Activated T-helper 1 cell treated with anti-CD3 and anti-CD28 coated beads, Interleukin-12 subunit alpha, Interleukin-12 subunit beta, Interleukin-2, Interleukin-4 antibody, amounts not matched to agents 30 ng/mL and 10 ng/mL and 1 ng/mL, durations not matched to agents 14 hours and 24 hours and 36 hours (primary cell): ENCODE measurements at regions of chr5 and their contacts with region 1.

Region 1: DNA sequence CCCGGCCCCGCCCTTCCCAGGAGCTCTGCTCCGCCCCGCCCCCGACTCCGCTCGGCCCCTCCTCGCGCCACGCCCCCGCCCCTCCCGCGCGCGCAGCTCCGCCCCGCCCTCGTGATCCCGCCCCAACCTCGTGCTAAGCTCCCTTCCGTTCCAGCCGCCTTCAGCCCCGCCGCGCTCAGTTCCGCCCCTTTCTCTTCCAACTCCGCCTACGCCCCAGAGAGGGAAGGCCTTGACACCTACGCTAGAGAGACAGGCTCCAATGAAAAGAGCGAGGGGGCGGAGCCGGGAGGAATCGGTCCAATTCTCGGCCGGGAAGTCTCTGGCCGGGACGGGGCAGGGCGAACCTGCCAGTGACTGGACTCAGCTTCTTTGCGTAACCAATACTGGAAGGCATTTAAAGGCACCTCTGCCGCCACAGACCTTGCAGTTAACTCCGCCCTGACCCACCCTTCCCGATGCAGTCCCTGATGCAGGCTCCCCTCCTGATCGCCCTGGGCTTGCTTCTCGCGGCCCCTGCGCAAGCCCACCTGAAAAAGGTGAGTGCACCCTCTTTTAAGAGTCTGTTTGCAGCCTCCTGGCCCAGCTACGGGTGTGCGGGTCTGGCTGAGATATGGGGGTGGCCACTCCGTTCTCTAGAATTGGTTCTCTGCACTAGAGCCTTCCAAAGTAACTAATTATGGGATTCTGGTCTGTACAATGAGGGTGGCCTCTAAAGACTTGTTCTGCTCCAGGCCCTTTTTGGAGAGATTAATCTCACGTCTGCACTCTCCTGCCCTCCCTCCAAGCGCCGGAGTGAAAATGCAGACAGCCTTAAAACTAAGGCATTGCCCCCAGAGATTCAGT is at the start of gene GM2A:
- DNase-seq: peak; percentile 99
- H3K4me3 Mint-ChIP-seq: peak within 1 kb of the TSS; percentile 87
- H3K27ac Mint-ChIP-seq: peak within 1 kb of the TSS; percentile 88
- H3K4me1 Mint-ChIP-seq: peaks cover 44% of the 10 kb centered on the region
- H3K27me3 Mint-ChIP-seq: peaks cover 2% of the 10 kb centered on the region
- total RNA-seq, gene GM2A: 16.9 and 21.1 TPM in 2 replicates

Region 2: DNA sequence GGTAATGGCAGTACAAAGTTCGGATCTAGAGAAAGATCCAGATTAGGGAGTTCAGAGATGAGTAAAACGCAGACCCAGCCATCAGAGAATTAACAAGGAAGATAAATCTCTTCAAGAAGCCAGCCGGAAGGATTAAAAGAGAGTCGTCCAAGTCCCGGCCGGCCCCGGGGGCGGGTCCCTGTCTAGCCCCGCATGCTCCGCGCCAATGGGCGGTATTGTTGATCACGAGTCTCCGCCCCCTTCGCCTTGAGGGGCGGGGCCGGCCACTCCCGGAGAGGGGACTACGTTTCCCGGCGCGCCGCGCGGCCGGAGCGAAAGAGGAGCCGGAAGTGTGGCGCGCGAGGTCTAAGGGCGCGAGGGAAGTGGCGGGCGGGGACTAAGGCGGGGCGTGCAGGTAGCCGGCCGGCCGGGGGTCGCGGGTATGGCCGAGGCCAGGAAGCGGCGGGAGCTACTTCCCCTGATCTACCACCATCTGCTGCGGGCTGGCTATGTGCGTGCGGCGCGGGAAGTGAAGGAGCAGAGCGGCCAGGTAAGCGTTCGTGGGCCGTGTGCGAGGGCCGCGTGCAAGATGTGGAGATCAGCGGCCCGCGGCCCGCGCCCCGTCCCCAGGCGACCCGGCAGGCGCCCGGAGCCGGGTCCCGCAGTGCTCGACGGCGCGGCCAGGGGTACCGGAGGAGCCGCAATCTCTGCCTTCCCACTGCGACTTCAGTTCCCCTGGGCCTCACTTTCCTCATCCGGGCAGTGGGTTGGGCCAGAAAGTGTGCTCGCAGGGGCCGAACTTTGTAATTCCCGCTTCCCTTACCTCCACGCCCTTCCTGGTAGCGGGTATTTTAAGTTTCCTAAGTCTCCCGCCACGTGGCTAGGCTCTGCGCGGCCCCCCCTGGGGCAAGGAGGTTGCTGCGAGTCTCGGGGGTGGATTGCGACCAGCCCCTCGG is 895.4 kb before region 1 on chr5 and contains the start of gene TCOF1:
- intact Hi-C with region 1: loop called (anchors 5 kb)
- DNase-seq: peak; percentile 97
- H3K4me3 Mint-ChIP-seq: peak within 1 kb of the TSS; percentile 93
- H3K27ac Mint-ChIP-seq: peak within 1 kb of the TSS; percentile 91
- H3K4me1 Mint-ChIP-seq: peaks cover 39% of the 10 kb centered on the region
- H3K27me3 Mint-ChIP-seq: no peaks in the 10 kb centered on the region
- total RNA-seq, gene TCOF1: 130 and 131 TPM in 2 replicates

Region 3: DNA sequence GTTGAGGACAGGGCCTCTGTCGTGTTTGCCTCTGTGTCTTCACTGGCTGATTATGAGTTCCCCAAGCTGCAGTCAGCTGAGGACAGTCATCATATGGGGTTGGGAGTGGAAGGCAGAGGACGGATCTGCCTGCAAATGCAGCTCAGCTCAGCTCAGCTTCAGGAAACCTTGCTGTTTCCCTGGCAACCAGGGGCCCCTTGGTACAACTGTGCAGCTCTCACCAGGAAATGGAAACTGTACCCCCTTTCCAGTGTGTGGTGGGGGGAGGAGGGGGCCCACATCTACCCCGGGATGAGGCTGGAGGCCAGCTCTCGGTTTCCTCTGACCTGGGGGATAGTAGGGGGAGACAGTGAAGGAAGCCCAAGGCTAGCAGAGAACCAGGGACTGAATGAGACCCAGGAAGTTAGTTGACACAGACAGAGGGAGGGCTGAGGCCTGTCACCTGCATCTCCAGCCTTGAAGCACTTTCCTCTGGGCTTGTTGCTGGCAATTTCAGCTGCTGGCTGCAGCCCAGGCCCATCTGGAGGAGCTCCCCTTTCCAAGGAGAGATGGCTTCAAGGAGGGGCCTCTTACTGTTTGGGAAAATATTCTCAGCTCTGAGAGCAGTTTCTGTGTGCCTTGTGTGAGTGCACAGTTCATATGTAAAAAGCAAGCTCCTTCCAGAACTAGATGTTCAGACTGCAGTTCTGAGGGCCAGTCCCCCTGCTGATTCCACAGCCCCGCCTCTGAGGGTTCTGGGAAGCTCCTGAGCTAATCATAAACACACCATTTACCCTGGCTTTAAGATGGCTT is 102.3 kb before region 1 on chr5:
- intact Hi-C with region 1: loop called (anchors 1 kb)
- DNase-seq: peak; percentile 67
- H3K4me3 Mint-ChIP-seq: peak overlapping the region; percentile 71
- H3K27ac Mint-ChIP-seq: peak overlapping the region; percentile 96
- H3K4me1 Mint-ChIP-seq: peaks cover 95% of the 10 kb centered on the region
- H3K27me3 Mint-ChIP-seq: no peaks in the 10 kb centered on the region

Region 4: GRCh38 chr5:151223469-151224264 is 29.3 kb before region 1 on chr5 and contains the start of gene CCDC69:
- intact Hi-C with region 1: loop called (anchors 1 kb)
- DNase-seq: peak; percentile 43
- H3K4me3 Mint-ChIP-seq: peak within 1 kb of the TSS; percentile 77
- H3K27ac Mint-ChIP-seq: peak within 1 kb of the TSS; percentile 78
- H3K4me1 Mint-ChIP-seq: peaks cover 49% of the 10 kb centered on the region
- H3K27me3 Mint-ChIP-seq: no peaks in the 10 kb centered on the region
- total RNA-seq, gene CCDC69: 24.3 and 25.4 TPM in 2 replicates

Region 5: GRCh38 chr5:151270599-151270998 is 17.6 kb after region 1 on chr5:
- intact Hi-C with region 1: loop called (anchors 1 kb)
- DNase-seq: peak; percentile 12
- H3K4me3 Mint-ChIP-seq: no peak overlapping the region
- H3K27ac Mint-ChIP-seq: no peak overlapping the region
- H3K4me1 Mint-ChIP-seq: no peaks in the 10 kb centered on the region
- H3K27me3 Mint-ChIP-seq: peaks cover 2% of the 10 kb centered on the region

Region 6: DNA sequence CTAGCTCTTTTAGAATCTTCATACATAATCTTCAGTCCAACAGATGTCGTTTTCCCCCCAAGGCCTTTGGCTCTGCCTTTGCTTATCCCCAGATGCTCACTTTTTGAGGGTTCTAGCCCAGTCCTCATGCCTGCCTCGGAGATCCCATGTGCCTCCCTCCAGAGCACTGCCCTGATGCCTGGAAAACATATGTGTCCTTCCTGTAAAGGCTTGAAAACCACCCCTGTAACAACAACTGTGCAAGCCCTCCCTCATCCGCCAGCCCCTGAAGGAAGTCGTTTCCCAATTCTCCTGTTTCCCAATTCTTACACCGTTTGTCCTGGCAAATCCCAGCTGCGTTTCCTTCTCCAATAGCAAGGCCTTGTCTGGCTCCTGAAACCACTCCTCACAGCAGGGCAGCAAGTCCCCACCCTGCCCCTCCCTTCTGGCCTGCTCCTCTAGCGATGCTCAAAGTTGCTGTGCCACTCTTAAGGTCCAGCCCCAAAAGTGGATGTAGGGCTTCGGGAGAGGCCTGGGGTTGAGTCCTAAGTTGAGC is 246.6 kb after region 1 on chr5:
- intact Hi-C with region 1: loop called (anchors 2 kb)
- DNase-seq: no peak
- H3K4me3 Mint-ChIP-seq: no peak overlapping the region
- H3K27ac Mint-ChIP-seq: no peak overlapping the region
- H3K4me1 Mint-ChIP-seq: peaks cover 6% of the 10 kb centered on the region
- H3K27me3 Mint-ChIP-seq: no peaks in the 10 kb centered on the region